PC-9 (cell line): ENCODE measurements at regions of chr20 and their contacts with region 1.

Region 1: DNA sequence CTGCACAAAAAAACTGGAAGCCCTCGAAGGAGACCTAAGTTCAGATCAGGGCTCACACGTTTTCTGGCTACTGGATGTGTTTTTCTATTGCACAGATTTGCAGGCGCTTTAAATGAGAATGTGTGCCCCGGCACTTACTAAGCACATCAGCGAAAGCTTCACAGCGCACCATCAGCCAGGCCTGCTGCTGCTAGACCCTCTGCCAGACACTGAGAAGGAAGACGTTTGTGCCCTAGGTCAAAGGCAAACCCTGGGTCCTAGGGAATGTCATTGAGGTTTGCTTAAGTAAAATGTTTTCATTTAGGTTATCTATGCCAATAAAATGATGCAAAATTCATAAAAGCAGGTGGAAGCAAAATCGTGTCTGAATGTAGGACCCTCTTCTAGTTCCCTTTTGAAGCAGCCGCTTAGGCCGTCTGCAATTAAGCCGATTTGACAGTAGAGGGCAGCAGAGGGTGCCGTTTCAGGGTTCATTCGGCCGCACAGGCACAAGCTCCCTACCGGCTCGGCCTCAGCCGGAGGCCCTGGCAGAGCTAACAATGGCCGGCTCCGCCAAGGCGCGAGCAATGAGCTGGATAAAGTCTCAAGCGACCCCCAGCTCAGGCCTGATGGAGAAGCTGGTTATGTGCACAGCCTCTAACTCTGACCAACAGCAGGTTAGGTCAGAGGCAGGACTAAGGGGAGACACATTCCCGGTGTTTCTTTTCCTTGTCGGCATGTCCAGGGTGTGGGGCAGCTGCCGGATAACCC is 107.2 kb upstream of the FOXA2 start:
- DNase-seq: peak in 1 of 2 experiments; percentile 72
- H3K4me3 ChIP-seq: no peak overlapping the region
- H3K27ac ChIP-seq: no peak overlapping the region
- H3K4me1 ChIP-seq: no peaks in the 10 kb centered on the region; the same call in 1 of the 2 replicates
- H3K27me3 ChIP-seq: no peaks in the 10 kb centered on the region
- CTCF ChIP-seq: peak; percentile 96

Region 2: GRCh38 chr20:22763257-22763906 is 71.8 kb after region 1 on chr20:
- CTCF ChIA-PET with region 1: interaction called, 5 read pairs
- POLR2A ChIA-PET with region 1: no interaction called
- intact Hi-C with region 1: loop called (anchors 2 kb)
- DNase-seq: peak; percentile 90 to 92
- H3K4me3 ChIP-seq: peak overlapping the region; percentile 29; the same call in 1 of the 2 replicates
- H3K27ac ChIP-seq: peak overlapping the region; percentile 98
- H3K4me1 ChIP-seq: peaks cover 46% of the 10 kb centered on the region
- H3K27me3 ChIP-seq: no peaks in the 10 kb centered on the region
- CTCF ChIP-seq: no peak

Region 3: DNA sequence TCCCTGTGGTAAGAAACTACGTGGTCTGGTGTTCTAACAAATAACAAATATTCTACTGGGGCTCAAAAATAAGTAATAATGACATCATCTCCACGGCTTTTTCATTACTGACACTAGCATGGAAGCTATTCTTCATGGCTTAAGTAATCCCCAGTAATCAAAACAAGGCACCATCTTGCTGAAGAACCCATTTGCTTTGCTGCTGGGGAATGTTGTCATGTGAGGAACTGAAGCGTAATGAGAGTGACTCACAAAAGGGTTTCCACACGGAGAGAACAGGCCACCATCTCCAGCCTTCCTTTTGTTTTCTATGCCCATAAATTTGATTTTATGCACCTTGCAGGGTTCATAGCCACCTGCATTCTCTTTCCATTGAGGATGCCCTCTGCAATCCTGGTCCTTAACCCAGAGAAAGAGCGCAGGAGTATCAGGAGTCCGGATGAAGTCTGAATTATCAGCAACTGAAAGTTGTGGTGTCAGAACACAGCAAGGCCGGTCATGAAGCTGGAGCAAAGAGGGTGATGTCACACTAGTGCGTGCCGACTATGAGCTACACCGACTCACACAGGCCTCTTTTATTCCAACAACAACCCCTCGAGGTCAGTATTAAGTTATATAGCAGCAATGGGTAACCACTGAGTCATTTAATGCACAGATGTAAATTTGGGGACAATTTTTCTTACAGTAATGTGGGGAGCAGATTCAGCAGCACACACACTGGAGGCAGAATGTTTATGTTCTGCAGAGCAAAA is 169.9 kb after region 1 on chr20:
- CTCF ChIA-PET with region 1: no interaction called
- POLR2A ChIA-PET with region 1: no interaction called
- intact Hi-C with region 1: loop called (anchors 10 kb)
- DNase-seq: no peak
- H3K4me3 ChIP-seq: no peak overlapping the region
- H3K27ac ChIP-seq: no peak overlapping the region
- H3K4me1 ChIP-seq: no peaks in the 10 kb centered on the region
- H3K27me3 ChIP-seq: no peaks in the 10 kb centered on the region
- CTCF ChIP-seq: no peak

Region 4: GRCh38 chr20:22974353-22974752 is 282.8 kb after region 1 on chr20:
- CTCF ChIA-PET with region 1: interaction called, 8 read pairs
- POLR2A ChIA-PET with region 1: no interaction called
- intact Hi-C with region 1: loop called (anchors 1 kb)
- DNase-seq: no peak
- H3K4me3 ChIP-seq: no peak overlapping the region
- H3K27ac ChIP-seq: no peak overlapping the region
- H3K4me1 ChIP-seq: no peaks in the 10 kb centered on the region
- H3K27me3 ChIP-seq: peaks cover 31% of the 10 kb centered on the region
- CTCF ChIP-seq: peak; percentile 77

Region 5: GRCh38 chr20:23200918-23201317 is 509.4 kb after region 1 on chr20:
- CTCF ChIA-PET with region 1: interaction called, 10 read pairs
- POLR2A ChIA-PET with region 1: no interaction called
- intact Hi-C with region 1: loop called (anchors 1 kb)
- DNase-seq: peak; percentile 49 to 60
- H3K4me3 ChIP-seq: no peak overlapping the region
- H3K27ac ChIP-seq: no peak overlapping the region
- H3K4me1 ChIP-seq: no peaks in the 10 kb centered on the region
- H3K27me3 ChIP-seq: no peaks in the 10 kb centered on the region
- CTCF ChIP-seq: peak; percentile 72

Region 6: GRCh38 chr20:23340524-23340923 is 649.0 kb after region 1 on chr20:
- CTCF ChIA-PET with region 1: interaction called, 9 read pairs
- POLR2A ChIA-PET with region 1: interaction called, 4 read pairs
- intact Hi-C with region 1: loop called (anchors 1 kb)
- DNase-seq: peak; percentile 59 to 61
- H3K4me3 ChIP-seq: no peak overlapping the region
- H3K27ac ChIP-seq: no peak overlapping the region
- H3K4me1 ChIP-seq: no peaks in the 10 kb centered on the region
- H3K27me3 ChIP-seq: no peaks in the 10 kb centered on the region
- CTCF ChIP-seq: peak; percentile 85

Region 7: GRCh38 chr20:23366384-23366783 is 674.8 kb after region 1 on chr20:
- CTCF ChIA-PET with region 1: no interaction called
- POLR2A ChIA-PET with region 1: no interaction called
- intact Hi-C with region 1: no loop called
- DNase-seq: no peak
- H3K4me3 ChIP-seq: no peak overlapping the region
- H3K27ac ChIP-seq: no peak overlapping the region
- H3K4me1 ChIP-seq: peaks cover 24% of the 10 kb centered on the region
- H3K27me3 ChIP-seq: no peaks in the 10 kb centered on the region
- CTCF ChIP-seq: no peak